ENCODE measurements at regions of chr2 and their contacts with region 1.

Region 1: GRCh38 chr2:53802617-53803151 is 15.8 kb downstream of the ERLEC1 start:
- DNase-seq: no peak
- ATAC-seq: no peak
- H3K4me3 ChIP-seq: no peak overlapping the region
- H3K4me3 Mint-ChIP-seq: no peak overlapping the region
- H3K27ac ChIP-seq: no peak overlapping the region
- H3K27ac Mint-ChIP-seq: no peak overlapping the region
- H3K4me1 ChIP-seq: no peaks in the 10 kb centered on the region
- H3K4me1 Mint-ChIP-seq: no peaks in the 10 kb centered on the region
- H3K27me3 ChIP-seq: no peaks in the 10 kb centered on the region
- H3K27me3 Mint-ChIP-seq: no peaks in the 10 kb centered on the region

Region 2: DNA sequence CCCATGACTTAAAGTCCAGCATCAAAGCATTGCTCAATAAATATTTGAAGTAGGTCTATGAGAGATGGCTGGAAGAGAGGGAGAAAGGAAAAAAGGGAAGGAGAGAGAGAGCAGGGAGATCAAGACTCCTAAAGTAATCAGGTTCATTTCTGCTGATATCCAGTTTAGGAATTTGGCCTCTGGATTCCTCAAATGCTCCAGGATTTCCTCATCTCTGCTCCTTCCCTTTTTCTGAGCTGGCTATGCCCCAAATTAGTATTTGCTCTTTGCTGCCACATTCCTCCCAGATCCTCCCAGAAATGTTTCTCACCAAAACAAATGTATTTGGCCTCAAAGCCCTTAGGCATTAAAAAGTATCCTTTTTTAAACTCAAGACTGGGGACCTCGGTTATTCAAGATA is 774.4 kb before region 1 on chr2:
- CTCF ChIA-PET with region 1: no interaction called
- POLR2A ChIA-PET with region 1: no interaction called
- DNase-seq: no peak
- ATAC-seq: no peak
- H3K4me3 ChIP-seq: no peak overlapping the region
- H3K4me3 Mint-ChIP-seq: no peak overlapping the region
- H3K27ac ChIP-seq: no peak overlapping the region
- H3K27ac Mint-ChIP-seq: no peak overlapping the region
- H3K4me1 ChIP-seq: no peaks in the 10 kb centered on the region
- H3K4me1 Mint-ChIP-seq: no peaks in the 10 kb centered on the region
- H3K27me3 ChIP-seq: no peaks in the 10 kb centered on the region
- H3K27me3 Mint-ChIP-seq: no peaks in the 10 kb centered on the region

Region 3: GRCh38 chr2:53182601-53183000 is 620.1 kb before region 1 on chr2:
- CTCF ChIA-PET with region 1: no interaction called
- POLR2A ChIA-PET with region 1: no interaction called
- DNase-seq: no peak
- ATAC-seq: no peak
- H3K4me3 ChIP-seq: no peak overlapping the region
- H3K4me3 Mint-ChIP-seq: no peak overlapping the region
- H3K27ac ChIP-seq: no peak overlapping the region
- H3K27ac Mint-ChIP-seq: peak overlapping the region in 1 of 2 donors; percentile 16
- H3K4me1 ChIP-seq: no peaks in the 10 kb centered on the region
- H3K4me1 Mint-ChIP-seq: peaks cover 0 to 18% (median 0%) of the 10 kb centered on the region in 3 donors
- H3K27me3 ChIP-seq: no peaks in the 10 kb centered on the region
- H3K27me3 Mint-ChIP-seq: no peaks in the 10 kb centered on the region

Region 4: GRCh38 chr2:53819634-53820033 is 16.9 kb after region 1 on chr2:
- CTCF ChIA-PET with region 1: interaction called in 1 of 2 experiments, 8 read pairs
- POLR2A ChIA-PET with region 1: interaction called in 1 of 2 experiments, 14 read pairs
- DNase-seq: no peak
- ATAC-seq: no peak
- H3K4me3 ChIP-seq: no peak overlapping the region
- H3K4me3 Mint-ChIP-seq: no peak overlapping the region
- H3K27ac ChIP-seq: no peak overlapping the region
- H3K27ac Mint-ChIP-seq: no peak overlapping the region
- H3K4me1 ChIP-seq: no peaks in the 10 kb centered on the region
- H3K4me1 Mint-ChIP-seq: no peaks in the 10 kb centered on the region
- H3K27me3 ChIP-seq: no peaks in the 10 kb centered on the region
- H3K27me3 Mint-ChIP-seq: no peaks in the 10 kb centered on the region

Measured in T-cell (primary cell).